Posterior cingulate gyrus (tissue), 11 donors: ENCODE measurements at regions of chr5 and their contacts with region 1.

Region 1: GRCh38 chr5:36305571-36306326 is 4.0 kb upstream of the RANBP3L start:
- DNase-seq: peak in 8 of 10 donors; percentile 16 to 91 (median 54)

Region 2: DNA sequence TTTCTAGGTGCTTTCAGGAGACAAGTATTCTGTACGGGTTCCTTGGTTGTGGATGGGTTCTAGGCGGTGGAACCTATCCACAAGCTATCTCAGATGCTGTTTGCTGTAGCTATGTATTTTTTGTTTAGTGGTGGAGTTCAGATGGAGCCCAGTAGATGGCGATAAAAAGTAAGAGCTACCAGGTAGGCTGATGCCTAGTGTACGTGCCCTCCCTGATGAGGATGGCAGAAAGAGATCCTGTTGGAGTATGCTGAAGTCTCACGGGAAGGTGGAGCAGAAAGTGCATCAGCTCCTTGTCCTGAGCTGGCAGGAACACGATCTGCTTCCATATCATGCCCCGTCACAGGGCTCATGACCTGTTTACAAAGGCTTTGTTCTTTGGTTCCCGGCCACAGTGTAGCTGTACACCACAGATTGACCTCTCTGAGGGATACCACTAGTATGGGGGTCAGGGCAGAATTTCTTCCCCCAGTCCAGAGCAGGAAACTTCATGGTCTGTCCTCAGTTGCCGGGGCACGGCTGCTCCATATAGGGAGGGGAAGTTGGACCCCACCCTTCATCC is 226.5 kb before region 1 on chr5:
- intact Hi-C with region 1: loop called (anchors 5 kb)
- DNase-seq: no peak

Region 3: DNA sequence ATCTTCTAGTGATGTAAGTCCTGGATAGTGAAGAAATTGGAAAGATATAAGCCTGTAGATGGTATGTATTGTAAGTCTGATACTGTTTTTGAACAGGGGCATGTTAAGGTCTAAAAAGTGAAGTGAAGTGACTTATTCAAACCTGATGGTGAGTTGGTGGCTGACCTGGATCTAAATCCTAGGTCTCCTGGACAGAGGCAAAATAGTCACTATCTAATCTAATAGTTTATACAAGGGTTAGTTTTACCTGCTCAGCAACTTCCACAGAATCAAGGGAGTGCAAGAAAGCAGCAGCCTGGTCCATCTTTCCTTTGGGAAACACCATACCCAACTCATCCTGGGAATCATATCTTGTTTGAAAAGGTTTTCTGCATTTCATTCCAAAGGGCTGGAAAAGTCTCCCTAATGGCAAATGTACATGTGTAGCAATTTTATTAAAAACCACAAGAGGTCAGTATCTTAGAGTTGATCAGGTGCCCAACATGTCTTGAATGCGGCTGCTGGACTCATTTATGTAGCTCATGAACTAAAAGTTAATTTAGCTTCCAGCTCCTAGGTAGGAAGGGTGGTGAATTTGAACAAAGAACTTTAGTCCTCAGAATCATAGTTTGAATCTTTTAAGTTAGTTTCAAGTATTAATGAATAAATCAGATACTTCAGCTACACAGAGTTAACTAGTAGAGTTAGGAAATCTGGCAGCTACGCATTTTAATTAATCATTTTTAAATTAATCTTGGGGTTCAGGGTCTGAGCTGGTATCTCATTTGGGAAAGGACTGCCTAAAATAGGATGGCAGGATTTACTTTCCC is 127.8 kb before region 1 on chr5:
- intact Hi-C with region 1: loop called (anchors 10 kb)
- DNase-seq: no peak

Region 4: GRCh38 chr5:36241631-36242533 is 63.9 kb before region 1 on chr5 and contains the start of gene NADK2:
- intact Hi-C with region 1: loop called (anchors 2 kb)
- DNase-seq: peak; percentile 92 to 99 (median 96)

Region 5: GRCh38 chr5:36269479-36270219 is 36.1 kb before region 1 on chr5:
- intact Hi-C with region 1: loop called (anchors 5 kb)
- DNase-seq: no peak